Colonic mucosa (tissue), 4 donors: ENCODE measurements at regions of chr21 and their contacts with region 1.

Region 1: DNA sequence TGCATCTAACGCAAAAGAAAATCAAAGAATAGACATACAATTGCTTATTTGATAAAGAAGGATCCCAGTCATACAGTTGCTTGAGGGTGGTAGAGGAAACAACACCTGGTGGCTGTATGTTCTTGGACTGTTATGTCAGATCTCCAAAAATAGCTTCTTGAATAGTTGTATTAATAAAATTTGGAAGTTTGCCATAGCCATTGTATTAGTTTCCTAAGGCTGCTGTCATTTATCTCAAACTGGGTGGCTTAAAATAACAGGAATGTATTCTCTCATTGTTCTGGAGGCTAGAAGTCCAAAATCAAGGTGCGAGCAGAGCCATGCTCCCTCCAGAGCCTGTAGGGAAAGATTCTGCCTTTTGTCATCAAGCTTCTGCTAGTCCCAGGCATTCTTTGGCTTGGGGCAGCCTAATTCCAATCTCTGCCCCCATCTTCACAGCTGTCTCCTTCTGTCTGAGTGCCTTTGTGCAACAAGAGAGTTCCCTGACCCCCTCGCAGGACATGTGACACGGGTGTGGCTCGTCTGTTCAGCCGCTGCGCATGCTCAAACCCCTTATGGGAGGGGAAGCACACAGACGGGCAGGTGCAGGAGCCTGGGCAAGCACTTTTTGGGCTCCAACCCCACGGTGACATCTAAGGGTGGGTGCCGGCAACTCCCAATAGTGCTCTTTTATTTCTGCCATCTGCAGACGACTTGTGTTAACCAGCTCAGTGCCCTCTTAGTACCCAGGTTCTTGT is 21.7 kb upstream of the GRIK1 start:
- DNase-seq: no peak
- H3K4me3 ChIP-seq: no peak overlapping the region
- H3K27ac ChIP-seq: no peak overlapping the region
- H3K4me1 ChIP-seq: no peaks in the 10 kb centered on the region
- H3K27me3 ChIP-seq: no peaks in the 10 kb centered on the region
- CTCF ChIP-seq: no peak

Region 2: DNA sequence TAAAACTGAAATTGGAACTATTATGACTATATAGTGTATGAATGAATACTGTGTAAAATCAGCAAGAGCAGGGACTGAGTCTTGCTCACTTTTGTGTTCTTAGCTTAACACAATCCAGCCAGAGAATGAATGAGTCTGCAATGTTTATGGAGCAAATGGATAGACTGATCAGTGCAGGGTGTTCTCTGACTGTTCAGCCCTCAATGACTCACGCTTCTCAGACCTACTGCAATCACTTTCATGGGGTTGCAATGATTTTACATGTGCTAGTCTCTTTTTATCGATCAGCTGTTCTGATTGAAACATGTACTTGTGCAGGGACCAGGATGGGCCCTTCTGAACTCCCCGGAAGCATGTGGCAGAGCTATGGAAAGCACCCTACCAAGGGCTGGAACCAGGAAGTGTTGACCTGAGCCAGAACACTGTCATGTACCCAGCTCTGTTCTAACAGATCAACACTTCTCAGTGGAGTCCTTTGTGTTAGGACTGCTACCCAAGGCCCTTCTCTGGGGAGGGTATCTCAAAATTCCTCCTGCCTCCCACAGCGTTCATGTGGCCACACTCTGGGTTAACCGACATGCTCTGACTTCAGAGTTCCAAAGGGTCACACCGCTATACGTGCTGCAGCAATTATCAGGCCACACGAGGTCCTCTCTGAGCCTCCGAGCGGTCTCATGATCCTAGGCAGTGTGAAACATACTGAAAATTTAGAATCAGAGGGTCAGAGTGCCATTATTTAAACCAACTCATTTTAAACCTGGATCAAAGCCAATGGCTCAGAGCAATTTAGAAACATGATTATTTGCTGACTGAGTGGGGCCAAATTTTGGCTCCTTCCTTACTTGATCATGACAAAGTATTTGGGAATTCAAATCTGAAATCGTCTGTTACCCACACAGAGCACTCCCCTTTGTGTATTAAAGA is 56.8 kb before region 1 on chr21:
- intact Hi-C with region 1: loop called (anchors 10 kb)
- DNase-seq: no peak
- H3K4me3 ChIP-seq: no peak overlapping the region
- H3K27ac ChIP-seq: no peak overlapping the region
- H3K4me1 ChIP-seq: no peaks in the 10 kb centered on the region
- H3K27me3 ChIP-seq: no peaks in the 10 kb centered on the region
- CTCF ChIP-seq: no peak

Region 3: DNA sequence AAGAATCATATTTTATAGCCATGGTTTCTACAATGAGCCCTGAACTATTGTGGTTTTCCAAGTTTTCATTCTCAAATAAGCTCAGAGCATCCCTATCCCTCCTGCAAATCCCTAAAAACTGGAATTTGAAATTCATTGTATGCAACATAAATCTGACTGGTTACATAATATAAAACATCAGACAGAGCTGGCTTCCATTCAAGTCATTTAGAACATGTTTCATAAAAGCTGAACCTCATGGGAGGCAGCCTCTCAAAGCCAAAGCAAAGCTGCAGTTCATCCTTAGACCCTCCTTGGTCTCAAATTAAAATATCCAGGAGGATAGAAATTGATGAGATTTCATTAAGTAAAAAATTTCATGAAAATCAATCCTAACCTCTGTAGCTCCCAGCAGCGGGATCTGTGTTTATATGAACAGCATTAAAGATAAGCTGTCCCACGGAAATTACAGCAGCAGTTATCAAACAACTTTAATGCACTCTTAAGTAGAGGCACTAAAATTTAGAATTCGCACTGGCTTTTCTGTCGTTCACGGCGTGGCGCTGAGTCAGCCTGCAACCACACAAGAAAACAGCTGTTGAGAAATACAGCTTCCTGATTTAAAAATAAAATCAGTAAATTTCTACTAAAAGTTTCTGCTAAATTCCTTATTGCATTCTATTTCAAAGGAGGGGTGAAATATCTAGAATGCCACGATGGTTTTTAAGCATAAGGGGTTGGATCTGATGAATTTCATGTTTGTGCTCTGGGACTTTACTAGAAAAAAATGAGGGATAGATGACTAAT is 1482.5 kb after region 1 on chr21:
- intact Hi-C with region 1: no loop called
- DNase-seq: no peak
- H3K4me3 ChIP-seq: no peak overlapping the region
- H3K27ac ChIP-seq: no peak overlapping the region
- H3K4me1 ChIP-seq: no peaks in the 10 kb centered on the region
- H3K27me3 ChIP-seq: no peaks in the 10 kb centered on the region
- CTCF ChIP-seq: no peak